Left colon (tissue), 2 donors: ENCODE measurements at regions of chr17 and their contacts with region 1.

Region 1: DNA sequence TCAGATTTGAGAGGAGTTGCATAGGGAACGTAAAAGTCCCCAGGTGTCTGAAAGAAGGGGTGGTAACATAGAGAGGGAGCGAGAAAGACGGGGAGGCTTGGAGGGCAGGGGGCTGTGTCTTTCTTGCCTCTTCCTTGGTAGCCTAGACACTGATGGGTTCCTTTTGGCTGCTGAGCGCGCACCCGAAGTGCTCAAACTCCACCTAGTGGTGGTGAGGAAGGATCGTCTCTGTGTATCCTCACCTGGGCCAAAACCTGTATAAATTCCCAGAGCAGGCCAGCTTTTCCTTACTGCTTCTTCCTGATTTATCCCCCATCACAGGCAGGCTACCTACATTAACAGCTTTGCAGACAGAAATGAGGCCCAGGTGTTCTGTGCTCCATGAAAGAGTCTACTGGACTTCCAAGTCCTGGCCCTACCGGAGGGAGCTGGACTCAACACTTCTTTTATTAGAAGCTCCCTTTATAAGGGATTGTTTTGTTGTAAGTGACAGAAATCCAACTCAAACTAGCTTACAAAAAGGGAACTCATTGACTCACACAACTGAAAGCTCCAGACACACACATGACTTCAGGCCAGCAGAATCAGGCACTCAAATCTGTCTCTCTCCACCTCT is 5.5 kb upstream of the SLC25A35 start:
- DNase-seq: peak; percentile 51 to 56
- ATAC-seq: peak; percentile 93

Region 2: DNA sequence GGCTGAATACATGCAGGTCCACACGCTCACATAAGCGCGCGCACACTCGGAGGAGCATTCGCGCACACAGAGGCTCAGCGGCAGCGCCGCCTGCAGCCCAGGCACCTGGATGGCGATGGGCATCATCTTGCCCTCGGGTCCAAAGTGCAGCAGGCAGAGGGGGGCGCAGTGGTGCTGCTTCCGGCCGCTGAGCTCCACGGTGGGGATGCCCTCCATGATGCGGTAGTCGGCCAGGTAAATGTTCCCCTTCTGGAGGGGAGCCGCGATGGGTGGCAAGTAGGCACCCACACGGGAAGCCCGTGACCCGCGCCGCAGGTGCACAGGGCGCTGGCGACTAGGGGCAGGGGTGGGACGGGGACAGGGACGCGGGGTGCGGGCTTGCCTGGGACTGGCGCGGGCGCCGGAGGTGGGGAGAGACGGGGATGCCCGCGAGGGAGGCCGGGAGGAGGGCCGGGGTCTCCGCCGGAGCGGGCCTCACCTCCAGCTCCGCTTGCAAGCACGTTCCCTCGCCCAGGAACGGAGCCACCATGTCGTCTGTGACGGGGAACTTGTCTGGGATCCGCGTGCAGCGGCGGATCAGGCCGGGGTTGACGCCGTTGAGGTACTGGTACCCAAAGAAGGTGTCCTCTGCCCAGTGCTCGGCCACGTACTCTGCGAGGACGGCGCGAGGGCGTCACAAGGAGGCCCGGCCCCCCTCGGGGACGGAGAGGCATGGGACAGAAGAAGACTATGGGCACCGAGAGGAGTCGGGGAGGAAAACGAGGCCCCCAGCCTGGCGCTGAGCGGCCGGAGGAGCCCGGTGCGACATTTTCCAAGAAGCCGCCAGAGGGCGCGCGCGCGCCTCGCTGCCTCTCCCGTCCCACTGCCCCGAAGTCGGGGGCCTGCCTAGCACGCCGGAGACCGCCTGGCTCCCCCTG is 221.2 kb before region 1 on chr17:
- intact Hi-C with region 1: loop called in 1 of 2 experiments (anchors 10 kb)
- DNase-seq: peak; percentile 62 to 80
- ATAC-seq: peak; percentile 84

Region 3: GRCh38 chr17:8405499-8406016 is 104.8 kb after region 1 on chr17:
- intact Hi-C with region 1: no loop called
- DNase-seq: no peak
- ATAC-seq: peak; percentile 19